ENCODE measurements at regions of chr3 and their contacts with region 1.

Region 1: GRCh38 chr3:167814441-167814951 is 79.0 kb downstream of the SERPINI1 start:
- DNase-seq: peak in 4 of 5 donors; percentile 38 to 62 (median 46)
- ATAC-seq: peak; percentile 90 to 96 (median 93)
- H3K4me3 ChIP-seq: no peak overlapping the region
- H3K27ac ChIP-seq: peak overlapping the region; percentile 34 to 87 (median 70)
- H3K4me1 ChIP-seq: peaks cover 12 to 44% (median 28%) of the 10 kb centered on the region in 12 donors
- H3K27me3 ChIP-seq: no peaks in the 10 kb centered on the region
- CTCF ChIP-seq: peak in 2 of 12 donors; percentile 8 to 16
- POLR2A ChIP-seq: no peak

Region 2: GRCh38 chr3:167750272-167750971 is 64.1 kb before region 1 on chr3:
- intact Hi-C with region 1: loop called in 1 of 10 experiments (anchors 10 kb)
- DNase-seq: no peak
- ATAC-seq: peak; percentile 61 to 87 (median 82)
- H3K4me3 ChIP-seq: peak overlapping the region in 4 of 12 donors; percentile 3 to 8 (median 6)
- H3K27ac ChIP-seq: peak overlapping the region in 1 of 12 donors; percentile 11
- H3K4me1 ChIP-seq: peaks cover 0 to 13% (median 3%) of the 10 kb centered on the region in 12 donors
- H3K27me3 ChIP-seq: no peaks in the 10 kb centered on the region
- CTCF ChIP-seq: no peak
- POLR2A ChIP-seq: no peak

Region 3: GRCh38 chr3:167773584-167773983 is 40.9 kb before region 1 on chr3:
- intact Hi-C with region 1: no loop called
- DNase-seq: no peak
- ATAC-seq: no peak
- H3K4me3 ChIP-seq: no peak overlapping the region
- H3K27ac ChIP-seq: no peak overlapping the region
- H3K4me1 ChIP-seq: no peaks in the 10 kb centered on the region
- H3K27me3 ChIP-seq: no peaks in the 10 kb centered on the region
- CTCF ChIP-seq: no peak
- POLR2A ChIP-seq: no peak

Region 4: GRCh38 chr3:167861649-167862048 is 47.2 kb after region 1 on chr3:
- intact Hi-C with region 1: no loop called
- DNase-seq: no peak
- ATAC-seq: no peak
- H3K4me3 ChIP-seq: no peak overlapping the region
- H3K27ac ChIP-seq: peak overlapping the region in 7 of 12 donors; percentile 28 to 90 (median 55)
- H3K4me1 ChIP-seq: peaks cover 0 to 53% (median 17%) of the 10 kb centered on the region in 12 donors
- H3K27me3 ChIP-seq: no peaks in the 10 kb centered on the region
- CTCF ChIP-seq: no peak
- POLR2A ChIP-seq: no peak

Region 5: DNA sequence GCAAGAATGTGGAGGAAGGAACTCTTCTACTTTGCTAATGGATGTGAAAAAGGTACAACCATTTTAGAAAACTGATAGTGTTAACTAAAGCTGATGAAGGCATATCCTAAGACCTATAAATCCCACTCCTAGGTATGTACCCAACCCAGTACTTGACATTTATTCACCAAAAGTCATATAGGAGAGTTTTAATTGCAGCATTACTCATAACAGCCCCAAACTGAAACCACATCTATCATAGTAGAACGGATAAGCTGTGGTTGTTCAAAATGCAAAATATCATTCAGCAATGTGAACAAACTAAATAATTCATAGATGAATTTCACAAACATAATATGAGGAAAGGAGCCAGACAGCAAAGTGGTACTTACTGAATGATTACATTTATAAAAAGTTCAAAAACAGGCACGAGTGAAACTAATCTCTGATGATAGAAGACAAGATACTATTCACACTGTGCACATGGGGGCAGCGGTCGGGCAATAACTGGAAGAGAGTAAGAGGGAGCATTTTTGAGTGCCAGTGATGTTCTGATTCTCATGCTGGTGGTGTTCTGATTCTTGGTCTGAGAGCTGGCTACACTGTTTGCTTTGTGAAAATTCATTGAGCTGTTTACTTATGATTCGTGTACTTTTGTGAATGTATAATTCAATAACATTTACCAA is 247.0 kb after region 1 on chr3:
- intact Hi-C with region 1: no loop called
- DNase-seq: no peak
- ATAC-seq: no peak
- H3K4me3 ChIP-seq: no peak overlapping the region
- H3K27ac ChIP-seq: no peak overlapping the region
- H3K4me1 ChIP-seq: peaks cover 0 to 76% (median 22%) of the 10 kb centered on the region in 12 donors
- H3K27me3 ChIP-seq: no peaks in the 10 kb centered on the region
- CTCF ChIP-seq: no peak
- POLR2A ChIP-seq: no peak

Measured in heart left ventricle (tissue), 16 donors.